Motor neuron (in vitro differentiated cells): ENCODE measurements at regions of chr2 and their contacts with region 1.

Region 1: DNA sequence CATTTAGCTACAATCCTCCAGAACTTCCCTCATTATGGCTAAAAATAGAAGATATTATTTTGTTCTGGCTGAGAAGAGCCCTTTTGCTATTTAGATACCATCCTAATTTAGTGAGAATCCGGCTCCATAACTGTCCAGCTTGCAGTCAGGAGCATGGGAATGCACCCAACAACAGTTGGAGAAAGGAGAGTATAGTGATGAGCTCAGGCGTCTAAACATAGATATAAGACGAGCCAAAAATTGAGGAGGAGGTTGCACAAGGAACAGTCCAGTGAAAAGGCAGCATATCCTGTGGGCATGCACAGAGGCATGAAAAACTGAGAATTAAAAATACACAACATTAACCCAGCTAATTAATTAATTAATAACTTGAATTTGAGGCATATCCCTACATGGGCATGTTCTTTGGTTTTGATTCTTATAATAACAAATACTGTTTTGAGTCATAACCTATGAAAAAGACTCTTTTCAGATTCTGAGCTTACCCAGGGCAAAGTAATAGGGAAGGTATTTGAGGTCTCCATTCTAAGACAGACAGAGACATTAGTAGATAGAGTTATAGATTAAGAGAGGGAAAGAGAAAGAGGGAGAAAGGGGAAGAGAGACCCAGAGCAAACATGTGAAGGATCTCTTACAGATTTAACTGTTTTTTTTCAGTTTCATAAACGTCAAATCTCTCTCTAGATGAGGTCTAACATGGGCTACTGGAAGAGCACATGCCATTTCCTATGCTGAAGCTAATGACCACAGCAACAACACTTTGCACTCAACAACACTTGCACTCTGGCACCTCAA is 311.2 kb downstream of the OSR1 start:
- ATAC-seq: no peak
- H3K4me3 ChIP-seq: no peak overlapping the region
- H3K27ac ChIP-seq: no peak overlapping the region
- H3K4me1 ChIP-seq: no peaks in the 10 kb centered on the region

Region 2: GRCh38 chr2:18940184-18940583 is 107.0 kb before region 1 on chr2:
- in situ Hi-C with region 1: loop called in 1 of 9 experiments (anchors 25 kb)
- ATAC-seq: no peak
- H3K4me3 ChIP-seq: no peak overlapping the region
- H3K27ac ChIP-seq: no peak overlapping the region
- H3K4me1 ChIP-seq: no peaks in the 10 kb centered on the region

Region 3: DNA sequence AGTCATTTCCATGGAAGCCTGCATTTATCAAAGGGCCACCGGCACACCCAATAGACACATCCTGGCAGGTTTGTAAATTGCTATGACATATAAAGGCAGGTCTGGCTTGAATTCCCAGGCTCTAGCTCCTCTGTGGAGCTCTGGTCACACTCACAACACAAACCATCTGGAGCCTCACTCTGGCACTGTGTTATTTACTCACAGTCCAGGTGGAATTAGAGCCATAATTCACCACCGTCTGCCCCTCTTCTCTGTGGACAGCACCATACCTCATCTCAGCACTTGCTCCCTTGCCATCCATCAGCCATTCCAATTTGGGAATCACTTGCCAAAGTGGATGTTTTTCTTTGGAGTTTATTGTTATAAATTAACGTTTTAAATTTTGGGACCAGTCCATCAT is 395.5 kb after region 1 on chr2:
- in situ Hi-C with region 1: no loop called
- ATAC-seq: no peak
- H3K4me3 ChIP-seq: no peak overlapping the region
- H3K27ac ChIP-seq: no peak overlapping the region
- H3K4me1 ChIP-seq: no peaks in the 10 kb centered on the region